HEK293T (cell line): ENCODE measurements at regions of chr19 and their contacts with region 1.

Region 1: GRCh38 chr19:2475702-2476450 is at the start of gene GADD45B:
- DNase-seq: peak; percentile 99

Region 2: GRCh38 chr19:2412449-2412848 is 63.4 kb before region 1 on chr19:
- CTCF ChIA-PET with region 1: no interaction called
- POLR2A ChIA-PET with region 1: no interaction called
- DNase-seq: no peak

Region 3: GRCh38 chr19:2446271-2446779 is 29.6 kb before region 1 on chr19:
- CTCF ChIA-PET with region 1: no interaction called
- POLR2A ChIA-PET with region 1: no interaction called
- DNase-seq: no peak

Region 4: DNA sequence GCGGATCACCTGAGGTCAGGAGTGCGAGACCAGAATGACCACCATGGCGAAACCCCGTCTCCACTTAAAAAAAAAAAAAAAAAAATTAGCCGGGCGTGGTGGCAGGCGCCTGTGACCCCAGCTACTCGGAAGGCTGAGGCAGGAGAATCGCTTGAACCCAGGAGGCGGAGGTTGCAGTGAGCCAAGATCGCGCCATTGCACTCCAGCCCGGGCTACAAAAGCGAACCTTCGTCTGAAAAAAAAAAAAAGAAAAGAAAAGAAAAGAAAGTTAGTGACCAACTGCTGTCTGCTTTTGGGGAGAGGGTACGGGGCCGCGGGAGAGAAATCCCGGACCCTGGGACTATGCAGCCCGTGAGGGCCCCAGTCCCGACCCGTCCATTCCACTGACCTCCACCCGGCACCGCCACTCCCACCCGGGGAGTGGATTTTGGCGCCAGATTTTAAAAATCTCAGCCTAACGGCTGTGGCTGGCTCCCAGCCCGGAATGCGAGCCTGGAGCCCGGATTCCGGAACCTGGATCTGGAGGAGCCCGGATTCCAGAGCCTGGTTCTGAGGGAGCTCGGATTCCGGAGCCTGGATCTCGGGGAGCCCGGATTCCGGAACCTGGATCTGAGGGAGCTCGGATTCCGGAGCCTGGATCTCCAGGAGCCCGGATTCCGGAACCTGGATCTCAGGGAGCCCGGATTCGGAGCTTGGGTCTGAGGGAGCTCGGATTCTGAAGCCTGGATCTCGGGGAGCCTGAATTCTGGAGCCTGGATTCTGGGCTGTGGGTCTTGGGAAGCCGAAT is 13.0 kb before region 1 on chr19:
- CTCF ChIA-PET with region 1: no interaction called
- POLR2A ChIA-PET with region 1: interaction called, 27 read pairs
- DNase-seq: peak; percentile 62

Region 5: GRCh38 chr19:2507109-2507508 is 31.2 kb after region 1 on chr19:
- CTCF ChIA-PET with region 1: no interaction called
- POLR2A ChIA-PET with region 1: interaction called, 24 read pairs
- DNase-seq: peak; percentile 37

Region 6: GRCh38 chr19:2532252-2533071 is 56.6 kb after region 1 on chr19:
- CTCF ChIA-PET with region 1: interaction called, 5 read pairs
- POLR2A ChIA-PET with region 1: interaction called, 95 read pairs
- DNase-seq: no peak

Region 7: GRCh38 chr19:2552859-2553258 is 77.0 kb after region 1 on chr19:
- CTCF ChIA-PET with region 1: no interaction called
- POLR2A ChIA-PET with region 1: interaction called, 79 read pairs
- DNase-seq: no peak

Region 8: GRCh38 chr19:2610637-2611482 is 135.0 kb after region 1 on chr19:
- CTCF ChIA-PET with region 1: interaction called, 15 read pairs
- POLR2A ChIA-PET with region 1: interaction called, 81 read pairs
- DNase-seq: peak; percentile 81